GM10248 (cell line): ENCODE measurements at regions of chr15 and their contacts with region 1.

Region 1: DNA sequence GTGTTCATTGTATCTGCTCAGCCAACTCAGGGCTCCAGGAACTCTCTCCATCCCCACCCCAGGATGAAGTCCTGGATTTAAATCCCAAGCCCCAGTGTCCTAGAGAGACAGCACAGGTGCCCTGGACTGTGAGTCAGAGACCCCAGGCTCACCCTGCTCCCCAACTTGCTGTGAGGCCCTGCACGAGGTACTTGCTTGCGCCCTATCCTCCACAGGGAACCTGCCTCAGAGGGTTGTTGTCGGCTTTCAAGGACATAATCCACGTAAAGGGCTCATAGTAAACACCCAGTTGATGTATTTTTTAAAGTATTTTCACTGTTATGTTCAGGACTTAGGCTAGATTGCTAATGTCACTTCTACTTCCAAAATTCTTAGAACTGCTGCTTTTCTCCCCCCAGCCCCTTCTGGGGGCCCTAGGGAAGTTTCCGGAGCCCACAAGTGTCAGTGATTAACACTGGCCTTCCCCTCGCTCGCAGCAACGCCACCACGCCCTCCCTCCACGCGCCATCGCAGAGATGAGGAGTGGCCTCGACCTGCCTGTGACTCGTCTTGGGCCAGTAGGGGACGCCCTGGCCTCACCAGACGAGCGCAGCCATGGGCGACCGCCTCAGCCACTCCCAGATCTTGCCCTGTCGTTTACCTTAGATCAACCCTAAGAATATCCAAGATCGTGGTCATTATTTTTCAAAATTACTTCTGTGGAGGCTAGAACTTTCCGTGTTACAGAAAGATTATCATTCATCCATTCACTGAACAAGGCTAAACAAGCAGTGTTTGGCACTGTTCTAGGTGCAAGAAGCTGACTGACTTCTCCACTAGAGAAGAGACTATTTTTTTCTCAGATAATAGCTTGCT is 6.0 kb upstream of the SRP14 start:
- DNase-seq: peak; percentile 88
- CTCF ChIP-seq: peak; percentile 99

Region 2: GRCh38 chr15:40029979-40030893 is 14.7 kb before region 1 on chr15:
- CTCF ChIA-PET with region 1: interaction called, 12 read pairs
- POLR2A ChIA-PET with region 1: no interaction called
- DNase-seq: no peak
- CTCF ChIP-seq: peak; percentile 45

Region 3: DNA sequence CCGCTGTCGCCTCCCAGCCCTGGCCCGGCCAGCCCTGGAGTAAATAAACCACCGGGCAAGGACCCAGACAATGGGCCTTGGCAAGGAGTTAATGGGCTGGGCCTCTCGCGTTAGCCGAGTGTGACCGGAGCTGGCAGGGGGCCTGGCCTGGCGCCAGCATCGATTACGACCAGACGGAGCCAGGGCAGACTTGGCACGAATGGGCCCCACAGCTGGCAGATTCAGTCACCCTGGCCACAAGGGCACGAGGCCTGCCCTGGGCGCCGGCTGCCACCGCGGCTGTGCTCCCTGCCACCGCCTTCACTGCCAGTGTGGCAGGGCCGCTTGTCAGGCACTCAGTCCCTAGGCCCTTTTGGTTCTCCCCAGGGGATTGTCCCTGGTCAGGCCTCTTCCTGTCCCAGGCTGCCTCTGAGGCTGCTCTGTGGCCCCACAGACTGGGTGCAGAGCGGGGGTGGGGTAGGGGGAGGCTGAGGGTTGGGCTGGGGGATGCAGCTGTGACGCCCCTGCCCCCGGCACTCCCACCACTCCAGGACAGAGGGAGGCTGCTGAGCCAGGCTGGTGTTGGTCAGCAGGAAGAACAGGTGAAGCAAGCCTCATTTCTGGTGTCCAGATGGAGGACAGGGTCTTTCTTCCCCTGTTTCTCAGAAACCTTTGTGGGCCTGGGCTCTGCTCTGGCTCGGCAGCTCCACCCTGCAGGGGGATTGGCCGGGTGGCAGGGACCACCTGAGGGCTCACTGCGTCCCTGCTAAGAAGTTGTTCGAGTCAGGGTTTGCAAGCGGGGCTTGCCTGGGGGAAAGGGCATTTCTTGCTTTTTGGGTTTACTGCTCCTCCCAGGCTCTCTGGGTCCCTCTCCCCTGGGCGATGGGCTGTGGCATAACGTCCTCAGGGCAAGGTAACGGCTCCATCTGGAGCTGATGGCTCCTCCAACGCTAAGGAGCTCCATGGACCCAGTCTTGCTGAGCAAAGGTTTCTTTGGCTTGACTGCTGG is 24.5 kb after region 1 on chr15:
- CTCF ChIA-PET with region 1: interaction called, 14 read pairs
- POLR2A ChIA-PET with region 1: no interaction called
- DNase-seq: peak; percentile 80
- CTCF ChIP-seq: no peak

Region 4: GRCh38 chr15:40160689-40161688 is 116.0 kb after region 1 on chr15 and contains the start of gene BUB1B:
- CTCF ChIA-PET with region 1: interaction called, 24 read pairs
- POLR2A ChIA-PET with region 1: no interaction called
- DNase-seq: peak; percentile 95
- CTCF ChIP-seq: no peak

Region 5: GRCh38 chr15:40182358-40183029 is 137.6 kb after region 1 on chr15:
- CTCF ChIA-PET with region 1: interaction called, 17 read pairs
- POLR2A ChIA-PET with region 1: no interaction called
- DNase-seq: no peak
- CTCF ChIP-seq: no peak